ENCODE measurements at regions of chr14 and their contacts with region 1.

Region 1: DNA sequence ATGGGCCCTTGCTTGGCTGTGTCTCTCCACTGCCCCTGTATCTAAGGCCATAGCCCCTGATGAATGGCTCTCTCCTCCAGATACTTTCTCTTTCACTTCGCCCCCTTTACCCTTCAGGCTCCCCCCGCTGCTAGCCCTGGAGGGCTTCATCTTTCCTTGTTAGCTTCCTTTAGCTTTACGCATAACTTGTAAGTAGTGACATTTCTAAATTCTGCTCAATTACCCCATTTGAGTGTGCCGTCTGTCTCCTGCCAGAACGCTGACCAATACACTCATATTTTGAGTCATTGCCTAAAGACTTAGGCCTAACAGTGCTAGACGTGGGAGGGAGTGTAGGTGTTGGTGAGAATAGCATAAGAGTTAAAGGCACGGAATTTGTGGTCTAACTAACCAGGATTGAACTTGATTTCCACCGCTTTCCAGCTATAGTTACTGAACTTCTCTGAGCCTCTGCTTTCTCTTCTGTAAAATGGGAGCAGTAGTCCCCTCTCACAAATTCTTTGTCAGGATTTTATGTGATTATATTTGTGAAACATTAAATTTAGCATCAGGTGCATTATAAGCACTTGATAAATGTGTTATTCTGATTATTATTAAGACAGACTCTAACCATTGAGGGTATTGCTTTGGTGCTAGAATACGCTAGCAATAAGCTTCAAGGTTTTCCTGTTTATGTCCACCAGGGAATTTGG is 129.3 kb downstream of the ZFP36L1 start:
- DNase-seq: peak; percentile 80
- ATAC-seq: peak; percentile 83
- H3K4me3 Mint-ChIP-seq: peak overlapping the region; percentile 33
- H3K27ac Mint-ChIP-seq: peak overlapping the region; percentile 84
- H3K4me1 Mint-ChIP-seq: peaks cover 49% of the 10 kb centered on the region
- H3K27me3 Mint-ChIP-seq: no peaks in the 10 kb centered on the region
- CTCF ChIP-seq: no peak

Region 2: GRCh38 chr14:68676511-68676943 is 13.0 kb after region 1 on chr14:
- CTCF ChIA-PET with region 1: interaction called, 14 read pairs
- POLR2A ChIA-PET with region 1: interaction called, 9 read pairs
- intact Hi-C with region 1: no loop called
- DNase-seq: no peak
- ATAC-seq: no peak
- H3K4me3 Mint-ChIP-seq: no peak overlapping the region
- H3K27ac Mint-ChIP-seq: no peak overlapping the region
- H3K4me1 Mint-ChIP-seq: peaks cover 22% of the 10 kb centered on the region
- H3K27me3 Mint-ChIP-seq: no peaks in the 10 kb centered on the region
- CTCF ChIP-seq: no peak

Region 3: DNA sequence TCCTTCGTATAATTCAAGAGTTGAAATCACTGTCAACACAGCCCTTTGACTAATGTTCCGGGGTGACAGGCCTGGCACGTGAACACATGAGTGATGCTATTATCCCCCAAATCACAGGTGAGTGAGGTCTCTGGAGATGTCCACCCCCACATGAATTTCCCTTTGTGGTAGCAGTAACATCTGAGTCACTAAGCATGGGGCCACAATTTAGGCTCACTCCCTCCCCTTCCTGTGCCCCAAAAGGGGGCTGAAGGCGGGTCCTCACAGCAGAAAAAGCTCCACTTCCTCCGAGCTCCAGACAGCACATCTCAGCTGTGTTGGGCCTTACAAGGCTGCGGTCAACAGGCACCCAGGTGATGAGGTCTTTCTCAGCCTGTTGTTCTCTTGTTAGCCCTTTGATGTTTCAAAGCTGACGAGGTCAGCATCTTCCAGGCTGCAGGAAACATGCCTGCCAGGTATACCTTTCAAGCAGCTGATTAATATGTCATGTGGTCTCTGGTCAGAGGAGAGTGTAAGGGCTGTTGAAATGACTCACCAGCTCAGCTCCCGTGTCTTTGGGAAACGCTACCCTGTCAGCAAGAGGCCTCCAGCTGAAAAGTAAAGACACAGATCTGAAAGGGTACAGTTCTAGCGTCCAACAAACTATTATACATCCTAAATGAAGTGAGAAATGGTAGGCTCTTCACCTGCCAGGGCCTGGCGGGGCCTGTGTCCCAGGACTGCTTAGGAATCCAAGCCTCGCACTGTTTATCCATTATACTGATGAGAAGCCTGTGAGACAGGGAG is 22.1 kb after region 1 on chr14:
- CTCF ChIA-PET with region 1: interaction called, 11 read pairs
- POLR2A ChIA-PET with region 1: interaction called, 12 read pairs
- intact Hi-C with region 1: no loop called
- DNase-seq: peak; percentile 92
- ATAC-seq: peak; percentile 90
- H3K4me3 Mint-ChIP-seq: peak overlapping the region; percentile 42
- H3K27ac Mint-ChIP-seq: peak overlapping the region; percentile 87
- H3K4me1 Mint-ChIP-seq: peaks cover 56% of the 10 kb centered on the region
- H3K27me3 Mint-ChIP-seq: no peaks in the 10 kb centered on the region
- CTCF ChIP-seq: no peak

Region 4: DNA sequence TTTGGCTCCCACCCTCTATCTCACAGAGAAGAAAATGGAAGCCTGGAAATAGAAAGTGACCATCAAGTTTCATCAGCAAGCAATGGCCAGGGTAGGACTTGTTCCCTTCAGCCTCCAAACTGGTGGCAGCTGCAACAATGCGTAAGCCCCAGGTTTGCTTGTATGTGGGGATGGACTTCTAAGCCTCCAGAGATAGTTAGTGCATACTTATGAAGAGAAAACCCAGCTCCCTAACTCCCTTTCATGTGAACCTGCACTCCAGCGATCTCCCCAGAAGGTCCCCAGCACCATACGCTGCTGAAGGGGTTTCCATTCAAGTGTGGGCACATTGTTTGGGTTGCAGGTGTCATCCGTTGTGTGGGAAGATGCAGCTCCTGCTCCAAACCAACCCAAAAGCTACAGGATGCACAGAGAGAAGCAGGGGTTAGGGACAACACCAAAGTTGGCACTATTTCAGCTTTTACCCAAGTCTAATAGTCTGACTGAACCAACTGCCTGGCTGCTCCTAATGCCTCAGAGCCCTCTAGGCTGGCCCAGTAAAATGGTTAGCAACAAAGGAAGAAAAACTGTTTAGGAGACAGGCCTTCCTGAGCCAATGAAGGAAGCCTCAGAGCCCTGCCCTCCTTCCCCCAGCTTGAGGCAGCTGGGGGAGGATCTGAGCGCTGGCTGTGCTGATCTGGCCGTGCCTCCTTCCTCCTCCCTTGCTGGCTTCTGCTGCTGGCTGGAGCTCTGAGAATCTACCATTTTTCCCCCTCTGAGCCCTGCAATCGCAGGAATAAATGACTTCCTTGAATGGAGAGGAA is 117.0 kb after region 1 on chr14:
- CTCF ChIA-PET with region 1: interaction called, 4 read pairs
- POLR2A ChIA-PET with region 1: interaction called, 21 read pairs
- intact Hi-C with region 1: no loop called
- DNase-seq: peak; percentile 55
- ATAC-seq: peak; percentile 24
- H3K4me3 Mint-ChIP-seq: peak overlapping the region; percentile 52
- H3K27ac Mint-ChIP-seq: peak overlapping the region; percentile 90
- H3K4me1 Mint-ChIP-seq: peaks cover 67% of the 10 kb centered on the region
- H3K27me3 Mint-ChIP-seq: no peaks in the 10 kb centered on the region
- CTCF ChIP-seq: no peak

Region 5: DNA sequence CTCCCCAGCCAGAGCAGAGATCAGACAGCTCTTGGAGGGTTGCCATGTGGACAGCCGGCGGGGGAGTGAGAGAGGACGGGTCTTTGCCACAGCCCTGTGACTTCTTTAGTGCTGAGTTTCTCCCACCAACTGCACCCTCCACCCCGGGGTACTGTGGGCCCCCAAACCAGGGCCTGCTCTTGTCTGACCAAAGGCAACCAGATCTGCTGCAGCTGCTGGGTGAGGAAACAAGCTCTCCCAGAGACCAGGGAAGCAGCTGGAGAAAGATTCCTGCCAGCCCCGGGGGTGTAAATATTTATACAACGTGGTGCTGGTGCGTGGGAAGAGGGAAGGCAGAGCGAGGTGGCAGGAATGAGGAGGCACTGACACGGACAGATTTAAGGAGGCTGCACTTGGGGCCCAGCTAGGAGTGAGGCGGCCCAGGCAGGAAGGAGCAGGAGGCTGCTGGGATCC is 143.6 kb after region 1 on chr14:
- CTCF ChIA-PET with region 1: no interaction called
- POLR2A ChIA-PET with region 1: no interaction called
- intact Hi-C with region 1: no loop called
- DNase-seq: no peak
- ATAC-seq: peak; percentile 29
- H3K4me3 Mint-ChIP-seq: no peak overlapping the region
- H3K27ac Mint-ChIP-seq: peak overlapping the region; percentile 66
- H3K4me1 Mint-ChIP-seq: peaks cover 32% of the 10 kb centered on the region
- H3K27me3 Mint-ChIP-seq: no peaks in the 10 kb centered on the region
- CTCF ChIP-seq: no peak

Measured in activated CD8-positive, alpha-beta T cell treated with anti-CD3 and anti-CD28 coated beads for 36 hours (primary cell).